ENCODE measurements at regions of chrX and their contacts with region 1.

Region 1: GRCh38 chrX:1657367-1658070 is 42.7 kb downstream of the ASMT start:
- DNase-seq: no peak
- H3K4me3 ChIP-seq: no peak overlapping the region
- H3K27ac ChIP-seq: no peak overlapping the region
- H3K4me1 ChIP-seq: no peaks in the 10 kb centered on the region
- H3K27me3 ChIP-seq: no peaks in the 10 kb centered on the region
- CTCF ChIP-seq: no peak
- POLR2A ChIP-seq: no peak

Region 2: GRCh38 chrX:2595258-2595657 is 937.7 kb after region 1 on chrX:
- intact Hi-C with region 1: loop called (anchors 10 kb)
- DNase-seq: no peak
- H3K4me3 ChIP-seq: no peak overlapping the region
- H3K27ac ChIP-seq: no peak overlapping the region
- H3K4me1 ChIP-seq: no peaks in the 10 kb centered on the region
- H3K27me3 ChIP-seq: no peaks in the 10 kb centered on the region
- CTCF ChIP-seq: no peak
- POLR2A ChIP-seq: no peak